Posterior vena cava (tissue), 2 donors: ENCODE measurements at regions of chr6 and their contacts with region 1.

Region 1: GRCh38 chr6:48423640-48424365 is 312.8 kb upstream of the PTCHD4 start:
- DNase-seq: no peak

Region 2: DNA sequence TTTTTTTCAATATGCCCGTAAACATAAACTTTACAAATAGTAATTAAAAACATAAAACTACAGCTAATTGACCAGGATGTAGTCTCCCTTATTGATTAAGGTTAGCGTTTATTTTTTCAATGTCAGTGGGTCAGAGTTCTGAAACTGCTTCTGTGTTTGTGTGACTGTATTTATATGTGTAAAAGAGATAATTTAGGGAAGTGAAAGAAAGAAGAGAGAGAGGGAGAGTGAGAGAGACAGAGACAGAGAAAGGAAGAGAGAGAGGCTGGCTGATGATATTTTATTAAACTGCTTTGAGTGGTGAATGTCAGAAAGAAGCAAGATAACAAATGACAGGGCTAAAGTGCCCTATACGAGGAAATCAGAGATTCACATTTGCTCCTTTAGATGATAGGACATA is 46.7 kb before region 1 on chr6:
- intact Hi-C with region 1: loop called in 1 of 2 experiments (anchors 2 kb)
- DNase-seq: no peak